Sigmoid colon (tissue), 7 donors: ENCODE measurements at regions of chr4 and their contacts with region 1.

Region 1: DNA sequence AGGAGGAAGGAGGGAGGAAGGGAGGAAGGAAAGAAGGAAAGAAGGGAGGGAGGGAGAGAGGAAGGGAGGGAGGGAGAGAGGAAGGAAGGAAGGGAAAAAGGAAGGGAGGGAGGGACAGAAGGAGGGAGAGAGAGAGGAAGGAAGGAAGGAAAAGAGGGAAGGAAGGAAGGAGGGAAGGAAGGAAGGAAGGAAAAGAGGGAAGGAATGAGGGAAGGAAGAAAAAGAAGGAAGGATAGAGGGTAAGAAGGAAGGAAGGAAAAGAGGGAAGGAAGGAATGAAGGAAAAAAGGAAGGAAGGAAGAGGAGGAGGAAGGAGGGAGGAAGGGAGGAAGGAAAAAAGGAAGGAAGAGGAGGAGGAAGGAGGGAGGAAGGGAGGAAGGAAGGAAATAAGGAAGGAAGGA is 796.8 kb downstream of the ARAP2 start:
- DNase-seq: no peak
- H3K4me3 ChIP-seq: no peak overlapping the region
- H3K27ac ChIP-seq: no peak overlapping the region
- H3K4me1 ChIP-seq: no peaks in the 10 kb centered on the region
- H3K27me3 ChIP-seq: no peaks in the 10 kb centered on the region
- CTCF ChIP-seq: no peak
- EP300 ChIP-seq: no peak
- POLR2A ChIP-seq: no peak

Region 2: GRCh38 chr4:35591035-35591434 is 143.6 kb after region 1 on chr4:
- intact Hi-C with region 1: loop called (anchors 5 kb)
- DNase-seq: no peak
- H3K4me3 ChIP-seq: no peak overlapping the region
- H3K27ac ChIP-seq: no peak overlapping the region
- H3K4me1 ChIP-seq: no peaks in the 10 kb centered on the region
- H3K27me3 ChIP-seq: no peaks in the 10 kb centered on the region
- CTCF ChIP-seq: no peak
- EP300 ChIP-seq: no peak
- POLR2A ChIP-seq: no peak